Common myeloid progenitor, CD34-positive (primary cell): ENCODE measurements at regions of chr16 and their contacts with region 1.

Region 1: DNA sequence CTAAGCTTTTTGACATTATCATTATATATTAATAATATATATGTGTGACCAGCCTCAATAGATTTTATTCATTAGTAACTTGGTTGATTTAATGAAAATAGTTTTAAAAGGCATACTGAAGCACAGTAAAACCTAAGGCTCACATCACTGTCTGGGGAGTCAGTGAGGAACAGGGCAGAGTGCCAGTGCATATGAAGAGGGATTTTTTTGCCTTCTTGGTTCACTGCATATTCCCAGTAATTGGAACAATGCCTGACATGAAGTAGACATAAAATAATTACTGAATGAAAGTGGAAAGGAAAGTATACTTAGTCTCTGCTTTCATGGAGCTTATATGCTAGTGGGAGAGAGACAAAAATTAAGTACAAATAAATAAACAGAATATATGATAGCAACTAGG is 81.1 kb downstream of the FTO start:
- DNase-seq: no peak
- H3K4me3 ChIP-seq: no peak overlapping the region
- H3K27ac ChIP-seq: no peak overlapping the region
- H3K4me1 ChIP-seq: no peaks in the 10 kb centered on the region
- H3K27me3 ChIP-seq: no peaks in the 10 kb centered on the region

Region 2: GRCh38 chr16:53761962-53762721 is 22.9 kb before region 1 on chr16:
- CTCF ChIA-PET with region 1: no interaction called
- POLR2A ChIA-PET with region 1: no interaction called
- DNase-seq: no peak
- H3K4me3 ChIP-seq: no peak overlapping the region
- H3K27ac ChIP-seq: no peak overlapping the region
- H3K4me1 ChIP-seq: no peaks in the 10 kb centered on the region
- H3K27me3 ChIP-seq: no peaks in the 10 kb centered on the region

Region 3: DNA sequence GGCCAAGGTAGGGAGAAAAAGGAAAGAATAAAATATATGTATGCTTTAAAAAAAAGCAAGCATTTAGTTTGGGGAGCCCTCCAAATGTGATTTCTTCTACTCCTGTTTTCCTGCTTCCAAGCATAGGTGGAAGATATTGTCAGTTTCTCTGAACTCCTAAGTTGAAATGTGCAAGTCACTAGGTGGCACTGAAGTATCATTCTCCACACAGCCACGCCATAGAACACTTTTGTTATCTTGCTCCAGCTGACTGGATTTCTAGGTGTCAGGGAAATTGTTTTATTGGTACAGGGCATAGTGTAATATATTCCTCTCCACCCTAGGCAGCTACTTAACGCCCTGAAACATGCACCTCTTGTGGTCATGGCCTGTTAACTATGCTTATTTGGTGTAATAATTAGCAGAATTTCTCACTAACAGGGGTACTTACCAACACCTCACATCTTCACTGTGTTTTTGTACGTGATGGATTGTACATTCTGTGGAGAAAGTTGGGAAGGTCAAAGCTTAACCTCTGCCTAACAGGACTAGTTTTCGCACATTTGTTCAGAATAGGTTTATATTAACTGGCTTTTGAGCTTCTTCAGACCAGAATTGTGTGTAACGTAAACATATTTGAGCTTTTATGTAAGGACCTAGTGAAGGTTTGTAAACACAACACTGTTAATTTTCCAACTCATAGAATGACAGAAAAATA is 11.7 kb before region 1 on chr16:
- CTCF ChIA-PET with region 1: interaction called, 31 read pairs
- POLR2A ChIA-PET with region 1: no interaction called
- DNase-seq: peak; percentile 46 to 74 (median 69)
- H3K4me3 ChIP-seq: no peak overlapping the region
- H3K27ac ChIP-seq: no peak overlapping the region
- H3K4me1 ChIP-seq: peaks cover 7 to 47% (median 15%) of the 10 kb centered on the region in 4 experiments
- H3K27me3 ChIP-seq: no peaks in the 10 kb centered on the region